Cardiac septum (tissue), 1 donor: ENCODE measurements at regions of chr4 and their contacts with region 1.

Region 1: GRCh38 chr4:77862478-77863216 is at the start of gene MRPL1:
- DNase-seq: peak; percentile 95
- total RNA-seq, gene MRPL1: 29.0 TPM

Region 2: DNA sequence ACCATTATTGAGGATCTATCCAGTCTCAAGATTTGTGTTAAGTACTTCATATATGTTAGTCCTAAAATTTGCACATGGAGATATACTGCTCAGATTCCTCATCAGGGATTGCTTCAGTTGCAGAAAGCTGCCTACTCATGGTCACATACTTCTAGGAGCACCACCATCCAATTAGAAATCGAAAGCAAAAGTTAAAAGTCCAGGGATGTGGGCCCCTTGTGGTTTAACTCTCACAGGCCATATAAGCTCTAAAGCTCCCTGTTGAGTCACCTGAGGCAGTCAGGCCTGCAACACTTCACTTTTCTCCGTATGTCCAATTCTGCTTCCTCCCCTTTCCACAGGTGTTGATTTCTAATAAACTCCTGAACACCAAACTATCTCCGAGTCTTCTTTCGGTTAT is 127.7 kb before region 1 on chr4:
- intact Hi-C with region 1: loop called (anchors 10 kb)
- DNase-seq: no peak

Region 3: DNA sequence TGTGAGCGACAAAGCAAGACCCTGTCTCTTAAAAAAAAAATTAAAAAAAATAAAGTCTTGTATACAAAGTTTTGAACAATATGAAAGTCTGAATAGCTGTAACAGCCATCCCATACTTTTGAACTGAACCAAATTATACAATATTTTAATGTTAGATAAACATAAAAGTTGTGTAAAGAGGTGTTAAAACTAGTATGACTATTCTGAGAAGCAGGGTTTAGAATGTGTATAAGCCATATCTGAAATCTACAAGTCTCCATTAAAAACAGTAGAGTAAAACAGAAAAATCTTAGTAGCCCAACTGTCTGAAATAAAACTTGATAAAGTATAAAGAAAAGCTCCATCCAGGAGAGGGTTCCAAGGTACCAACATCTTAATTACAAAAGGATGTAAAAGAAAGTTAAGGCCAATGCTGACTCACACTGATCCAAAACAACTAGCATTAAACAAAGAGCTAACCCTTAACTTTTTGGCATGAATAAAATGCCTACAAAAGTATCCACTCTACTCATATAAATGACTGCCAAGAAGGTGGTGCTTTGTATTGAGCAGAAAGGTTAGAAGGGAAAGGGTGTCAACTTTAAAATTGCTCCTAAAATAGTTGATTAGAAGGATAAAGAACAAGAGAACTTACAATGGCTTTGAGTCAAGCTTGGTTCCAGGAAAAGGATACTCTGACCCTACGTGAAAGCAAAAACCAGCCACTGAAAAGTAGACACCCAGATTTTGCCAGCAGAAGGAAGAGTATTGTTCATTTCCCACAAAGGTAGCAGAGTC is 62.0 kb before region 1 on chr4:
- intact Hi-C with region 1: loop called (anchors 1 kb)
- DNase-seq: no peak

Region 4: GRCh38 chr4:77819843-77820648 is 42.6 kb before region 1 on chr4:
- intact Hi-C with region 1: loop called (anchors 1 kb)
- DNase-seq: peak; percentile 98